ENCODE measurements at regions of chr18 and their contacts with region 1.

Region 1: GRCh38 chr18:31977270-31977872 is 34.4 kb upstream of the TRAPPC8 start:
- H3K4me3 ChIP-seq: no peak overlapping the region
- H3K27ac ChIP-seq: no peak overlapping the region
- H3K4me1 ChIP-seq: no peaks in the 10 kb centered on the region
- CTCF ChIP-seq: 0 out of 2 replicates have a peak, but pooled peaks have one; percentile 23

Region 2: GRCh38 chr18:31555971-31556747 is 421.2 kb before region 1 on chr18:
- CTCF ChIA-PET with region 1: interaction called, 10 read pairs
- POLR2A ChIA-PET with region 1: no interaction called
- H3K4me3 ChIP-seq: no peak overlapping the region
- H3K27ac ChIP-seq: no peak overlapping the region
- H3K4me1 ChIP-seq: no peaks in the 10 kb centered on the region
- CTCF ChIP-seq: peak; percentile 70

Region 3: GRCh38 chr18:31819106-31819924 is 158.1 kb before region 1 on chr18:
- CTCF ChIA-PET with region 1: interaction called, 19 read pairs
- POLR2A ChIA-PET with region 1: no interaction called
- H3K4me3 ChIP-seq: no peak overlapping the region
- H3K27ac ChIP-seq: no peak overlapping the region
- H3K4me1 ChIP-seq: no peaks in the 10 kb centered on the region
- CTCF ChIP-seq: peak; percentile 45; the same call in 1 of the 2 replicates

Region 4: GRCh38 chr18:31965316-31965970 is 11.9 kb before region 1 on chr18:
- CTCF ChIA-PET with region 1: interaction called, 19 read pairs
- POLR2A ChIA-PET with region 1: no interaction called
- H3K4me3 ChIP-seq: no peak overlapping the region
- H3K27ac ChIP-seq: no peak overlapping the region
- H3K4me1 ChIP-seq: no peaks in the 10 kb centered on the region
- CTCF ChIP-seq: no peak

Region 5: DNA sequence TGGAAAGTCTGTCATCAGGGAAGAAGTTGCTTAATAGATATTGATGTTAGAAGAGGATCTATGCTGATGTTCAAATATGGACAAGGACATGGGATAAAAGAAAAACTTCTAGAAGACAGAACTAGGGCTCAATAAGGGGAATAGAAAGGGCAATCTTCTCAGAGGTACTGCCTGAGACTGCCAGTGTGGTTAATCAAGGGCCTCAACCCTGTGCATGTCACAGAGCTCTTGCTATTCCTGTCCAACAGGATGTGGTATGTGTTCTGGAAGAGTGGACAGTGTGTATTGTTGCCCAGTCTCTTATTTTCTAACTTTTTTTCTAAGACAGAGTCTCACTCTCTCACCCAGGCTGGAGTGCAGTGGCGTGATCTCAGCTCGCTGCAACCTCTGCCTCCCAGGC is 13.5 kb after region 1 on chr18:
- CTCF ChIA-PET with region 1: interaction called, 15 read pairs
- POLR2A ChIA-PET with region 1: no interaction called
- H3K4me3 ChIP-seq: no peak overlapping the region
- H3K27ac ChIP-seq: no peak overlapping the region
- H3K4me1 ChIP-seq: no peaks in the 10 kb centered on the region
- CTCF ChIP-seq: no peak

Region 6: DNA sequence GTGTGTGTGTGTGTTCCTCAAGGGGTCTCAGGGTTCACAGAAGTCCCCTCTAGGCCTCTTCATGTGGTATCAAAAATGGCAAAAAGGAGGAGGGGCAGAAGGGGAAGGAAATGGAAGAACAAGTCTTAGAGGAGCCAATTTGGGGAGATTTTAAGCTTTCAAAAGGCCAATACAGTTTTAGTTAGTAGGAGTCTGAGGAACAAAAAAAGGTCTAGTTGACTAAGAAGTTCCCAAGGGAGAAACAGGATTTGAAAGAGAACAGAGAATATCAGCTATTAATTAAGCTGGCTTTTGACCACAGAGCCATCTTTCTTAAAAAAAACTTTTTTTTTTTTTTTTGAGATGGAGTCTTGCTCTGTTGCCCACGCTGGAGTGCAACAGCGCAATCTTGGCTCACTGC is 48.4 kb after region 1 on chr18:
- CTCF ChIA-PET with region 1: no interaction called
- POLR2A ChIA-PET with region 1: no interaction called
- H3K4me3 ChIP-seq: no peak overlapping the region
- H3K27ac ChIP-seq: no peak overlapping the region
- H3K4me1 ChIP-seq: no peaks in the 10 kb centered on the region
- CTCF ChIP-seq: no peak

Region 7: GRCh38 chr18:32308493-32309120 is 331.2 kb after region 1 on chr18:
- CTCF ChIA-PET with region 1: no interaction called
- POLR2A ChIA-PET with region 1: no interaction called
- H3K4me3 ChIP-seq: no peak overlapping the region
- H3K27ac ChIP-seq: no peak overlapping the region
- H3K4me1 ChIP-seq: no peaks in the 10 kb centered on the region
- CTCF ChIP-seq: no peak